Activated CD4-positive, alpha-beta memory T cell treated with anti-CD3 and anti-CD28 coated beads for 36 hours (primary cell): ENCODE measurements at regions of chr6 and their contacts with region 1.

Region 1: DNA sequence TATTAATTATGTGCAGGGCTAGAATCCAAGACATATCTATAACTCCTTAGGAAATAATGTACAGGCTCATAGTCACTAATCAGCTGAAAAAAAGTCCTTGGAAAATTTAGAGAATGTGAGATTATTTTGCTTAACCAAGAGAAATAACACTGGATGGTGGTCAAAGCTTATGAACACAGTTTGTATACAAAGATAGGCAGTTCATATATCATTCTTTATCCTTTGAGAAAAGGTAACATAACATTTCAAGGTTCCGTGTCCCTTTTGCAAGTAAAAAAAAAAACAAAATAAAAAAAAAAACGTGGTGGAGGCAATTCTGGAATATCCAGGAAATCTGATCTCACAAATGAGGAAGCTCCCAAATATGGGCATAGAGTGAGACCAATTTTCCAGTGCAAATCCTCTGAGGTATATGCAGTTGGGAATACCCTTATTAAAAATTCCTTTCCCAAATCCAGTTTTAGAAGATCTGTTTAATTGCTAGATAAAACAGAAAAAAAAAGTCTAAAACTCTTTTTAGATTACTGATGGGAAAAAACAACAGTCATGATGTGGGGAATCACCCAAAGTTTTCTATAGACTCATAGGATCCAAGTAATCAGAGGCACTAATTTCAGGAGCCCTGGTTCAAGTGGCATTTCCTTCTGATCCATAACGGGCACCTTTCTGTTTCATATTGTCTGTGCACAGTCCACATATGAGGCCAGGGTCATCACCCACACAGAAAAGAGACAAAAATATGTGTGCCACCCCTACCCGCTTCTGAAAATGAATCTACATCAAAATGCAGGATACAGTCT is 17.7 kb upstream of the TNFAIP3 start:
- DNase-seq: peak; percentile 78
- H3K4me3 Mint-ChIP-seq: no peak overlapping the region
- H3K27ac Mint-ChIP-seq: peak overlapping the region; percentile 79
- H3K4me1 Mint-ChIP-seq: peaks cover 35% of the 10 kb centered on the region
- H3K27me3 Mint-ChIP-seq: no peaks in the 10 kb centered on the region

Region 2: DNA sequence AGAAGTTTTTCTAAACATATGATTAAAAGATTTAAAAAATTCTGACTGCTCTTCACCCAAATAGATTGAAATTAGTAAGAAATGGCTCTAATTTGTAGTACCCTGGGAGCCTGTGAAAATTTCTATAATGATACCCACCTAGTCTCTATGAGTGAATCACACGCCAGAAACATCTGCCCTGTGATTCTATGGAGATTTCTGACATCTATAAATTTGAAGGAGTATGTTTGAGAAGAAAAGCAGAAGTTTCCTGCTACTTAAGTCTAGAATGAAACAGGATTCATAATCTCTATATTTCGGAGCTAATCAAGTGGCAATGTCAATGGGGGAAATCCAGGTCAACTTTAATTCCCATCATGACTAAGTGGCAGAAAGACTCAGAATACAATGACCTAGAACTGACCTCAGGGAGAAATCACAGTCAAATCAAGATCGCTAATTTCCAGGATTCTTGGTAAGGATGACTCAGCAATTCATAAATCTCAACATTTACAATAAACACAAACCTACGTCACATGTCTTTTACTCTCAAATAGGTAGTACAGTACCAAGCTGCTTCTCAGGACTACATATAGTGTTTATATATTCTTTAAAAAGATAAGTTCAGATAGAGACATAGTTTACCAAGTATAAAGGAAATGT is 168.6 kb before region 1 on chr6:
- CTCF ChIA-PET with region 1: no interaction called
- POLR2A ChIA-PET with region 1: no interaction called
- intact Hi-C with region 1: loop called (anchors 1 kb)
- DNase-seq: no peak
- H3K4me3 Mint-ChIP-seq: peak overlapping the region; percentile 18
- H3K27ac Mint-ChIP-seq: peak overlapping the region; percentile 75
- H3K4me1 Mint-ChIP-seq: peaks cover 64% of the 10 kb centered on the region
- H3K27me3 Mint-ChIP-seq: no peaks in the 10 kb centered on the region

Region 3: GRCh38 chr6:137780447-137781034 is 68.8 kb before region 1 on chr6:
- CTCF ChIA-PET with region 1: no interaction called
- POLR2A ChIA-PET with region 1: no interaction called
- intact Hi-C with region 1: no loop called
- DNase-seq: no peak
- H3K4me3 Mint-ChIP-seq: no peak overlapping the region
- H3K27ac Mint-ChIP-seq: no peak overlapping the region
- H3K4me1 Mint-ChIP-seq: peaks cover 4% of the 10 kb centered on the region
- H3K27me3 Mint-ChIP-seq: peaks cover 2% of the 10 kb centered on the region

Region 4: DNA sequence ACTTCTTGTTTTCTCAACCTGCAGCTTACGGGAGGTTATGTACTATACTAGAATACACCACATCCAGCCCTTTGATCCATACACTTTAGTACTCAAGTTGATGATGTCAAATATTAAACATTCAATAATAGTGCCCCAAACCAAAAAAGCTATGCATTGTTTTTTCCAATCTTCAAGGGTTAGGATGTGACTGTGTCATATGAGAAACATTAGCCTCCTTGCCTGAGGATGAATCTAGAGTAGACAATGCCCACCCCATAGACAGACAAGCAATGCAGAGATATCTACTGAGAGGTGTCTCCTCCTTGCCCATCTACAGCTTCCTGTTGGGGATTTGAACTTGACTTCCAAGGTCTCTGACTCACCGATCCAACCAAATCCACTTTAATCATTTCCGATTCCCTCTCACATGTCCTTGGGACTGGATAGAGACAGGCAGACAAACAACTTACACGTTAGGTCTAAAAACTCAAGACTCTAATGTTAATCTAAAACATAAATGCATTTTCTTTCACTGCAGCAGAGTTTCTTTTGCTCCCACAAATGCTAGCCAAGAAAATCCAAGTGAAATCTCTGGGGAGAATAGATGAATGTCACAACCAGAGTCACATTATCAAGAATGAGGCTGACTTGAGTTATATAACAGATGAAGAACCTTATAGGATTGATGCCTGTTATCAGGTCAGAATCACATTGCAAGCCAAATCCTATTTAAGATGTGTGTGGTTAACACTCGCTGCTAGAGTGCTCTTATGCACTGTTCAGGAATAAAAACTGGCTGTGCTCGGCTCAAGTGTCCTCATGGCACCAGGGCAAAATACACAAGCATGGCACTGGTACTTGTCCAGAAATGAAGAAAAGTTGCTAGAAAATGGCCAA is 57.9 kb before region 1 on chr6:
- CTCF ChIA-PET with region 1: no interaction called
- POLR2A ChIA-PET with region 1: no interaction called
- intact Hi-C with region 1: loop called (anchors 1 kb)
- DNase-seq: no peak
- H3K4me3 Mint-ChIP-seq: peak overlapping the region; percentile 62
- H3K27ac Mint-ChIP-seq: peak overlapping the region; percentile 59
- H3K4me1 Mint-ChIP-seq: peaks cover 53% of the 10 kb centered on the region
- H3K27me3 Mint-ChIP-seq: no peaks in the 10 kb centered on the region

Region 5: GRCh38 chr6:137811121-137811915 is 38.1 kb before region 1 on chr6:
- CTCF ChIA-PET with region 1: interaction called, 3 read pairs
- POLR2A ChIA-PET with region 1: no interaction called
- intact Hi-C with region 1: loop called (anchors 1 kb)
- DNase-seq: peak; percentile 90
- H3K4me3 Mint-ChIP-seq: peak overlapping the region; percentile 36
- H3K27ac Mint-ChIP-seq: peak overlapping the region; percentile 91
- H3K4me1 Mint-ChIP-seq: peaks cover 66% of the 10 kb centered on the region
- H3K27me3 Mint-ChIP-seq: no peaks in the 10 kb centered on the region

Region 6: DNA sequence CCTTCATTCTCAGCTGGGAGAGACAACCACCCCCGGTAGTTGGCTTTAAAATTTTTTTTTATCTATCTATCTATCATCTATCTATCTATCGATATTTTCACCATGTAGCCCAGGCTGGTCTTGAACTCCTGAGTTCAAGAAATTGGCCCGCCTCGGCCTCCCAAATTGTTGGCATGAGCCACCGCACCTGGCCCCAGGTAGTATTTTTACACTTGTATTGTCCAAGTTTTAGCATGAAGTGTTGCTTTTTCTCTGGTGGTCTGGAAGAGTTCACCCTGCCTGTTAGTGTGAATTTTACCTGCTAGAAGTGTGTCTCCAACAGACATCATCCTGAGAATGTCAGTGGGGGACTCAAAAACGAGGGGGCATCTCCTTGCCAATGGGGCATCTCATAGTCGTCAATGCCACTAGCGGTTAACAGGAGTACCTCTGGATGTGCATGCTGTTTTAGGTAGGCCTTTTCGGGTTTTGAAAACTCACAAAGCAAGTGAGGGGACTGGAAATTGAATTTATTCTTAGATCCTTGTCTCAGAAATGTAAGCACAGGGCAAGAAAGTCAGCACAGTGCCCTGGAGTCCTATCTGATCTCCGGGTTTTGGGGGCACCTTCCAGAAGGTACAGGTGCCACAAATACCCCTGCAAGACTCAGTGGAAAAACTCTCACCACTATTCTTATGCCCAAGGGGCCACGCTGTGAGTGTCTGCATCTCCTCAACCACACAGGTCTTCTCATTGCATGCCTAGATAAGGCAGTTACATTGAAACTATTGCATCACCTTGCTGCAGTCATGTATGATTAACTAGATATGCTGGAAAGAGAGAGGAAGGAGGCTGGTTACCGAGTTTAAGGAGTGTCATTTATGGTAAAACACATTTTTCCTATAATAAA is 54.8 kb after region 1 on chr6:
- CTCF ChIA-PET with region 1: no interaction called
- POLR2A ChIA-PET with region 1: no interaction called
- intact Hi-C with region 1: loop called (anchors 1 kb)
- DNase-seq: peak; percentile 75
- H3K4me3 Mint-ChIP-seq: peak overlapping the region; percentile 71
- H3K27ac Mint-ChIP-seq: peak overlapping the region; percentile 100
- H3K4me1 Mint-ChIP-seq: peaks cover 55% of the 10 kb centered on the region
- H3K27me3 Mint-ChIP-seq: no peaks in the 10 kb centered on the region

Region 7: DNA sequence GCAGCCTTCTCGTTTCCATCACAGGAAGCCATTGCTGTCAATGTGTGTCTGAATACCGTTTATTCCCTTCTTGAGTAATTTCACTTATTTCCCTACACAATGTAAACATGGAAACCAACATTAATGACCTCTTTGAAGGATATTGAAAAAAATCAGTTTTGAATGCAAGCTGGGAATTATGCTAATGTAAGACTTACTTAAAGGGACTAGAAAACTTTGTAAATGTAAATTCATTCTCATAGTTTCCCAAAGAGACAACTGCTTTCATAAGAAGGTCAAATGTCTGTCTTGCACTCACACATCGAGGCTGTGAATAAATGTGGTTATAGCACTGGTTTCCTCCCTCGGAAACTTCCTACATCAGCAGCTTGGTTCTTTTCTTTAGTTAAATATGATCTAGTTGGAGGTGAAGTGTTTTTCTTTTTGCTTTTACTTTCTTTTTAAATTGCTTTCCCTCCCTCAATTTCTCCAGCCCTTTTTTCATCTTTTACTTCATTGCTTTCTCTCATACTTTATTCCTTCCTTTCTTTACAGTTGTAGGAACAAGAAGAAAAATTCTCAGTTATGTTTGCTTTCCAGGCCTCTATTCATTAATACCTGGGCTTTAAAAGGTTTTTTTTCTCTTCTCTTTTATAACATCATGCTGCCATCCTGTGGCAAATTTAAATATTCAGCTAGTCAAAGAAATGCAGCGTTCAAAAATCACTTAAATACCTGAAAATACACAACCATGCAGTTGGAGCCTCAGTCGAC is 126.0 kb after region 1 on chr6:
- CTCF ChIA-PET with region 1: no interaction called
- POLR2A ChIA-PET with region 1: no interaction called
- intact Hi-C with region 1: loop called (anchors 1 kb)
- DNase-seq: peak; percentile 38
- H3K4me3 Mint-ChIP-seq: peak overlapping the region; percentile 64
- H3K27ac Mint-ChIP-seq: peak overlapping the region; percentile 84
- H3K4me1 Mint-ChIP-seq: peaks cover 59% of the 10 kb centered on the region
- H3K27me3 Mint-ChIP-seq: no peaks in the 10 kb centered on the region